ENCODE measurements at regions of chr2 and their contacts with region 1.

Region 1: GRCh38 chr2:10122386-10123280 is at the start of gene RRM2:
- DNase-seq: peak; percentile 92
- H3K4me3 Mint-ChIP-seq: peak within 1 kb of the TSS; percentile 99
- H3K27ac Mint-ChIP-seq: peak within 1 kb of the TSS; percentile 100
- H3K4me1 Mint-ChIP-seq: peaks cover 64% of the 10 kb centered on the region
- H3K27me3 Mint-ChIP-seq: no peaks in the 10 kb centered on the region
- total RNA-seq, gene RRM2: 328 and 351 TPM in 2 replicates

Region 2: GRCh38 chr2:9951272-9951972 is 171.2 kb before region 1 on chr2 and contains the start of gene GRHL1:
- intact Hi-C with region 1: loop called (anchors 1 kb)
- DNase-seq: peak; percentile 92
- H3K4me3 Mint-ChIP-seq: peak within 1 kb of the TSS; percentile 85
- H3K27ac Mint-ChIP-seq: peak within 1 kb of the TSS; percentile 82
- H3K4me1 Mint-ChIP-seq: peaks cover 24% of the 10 kb centered on the region
- H3K27me3 Mint-ChIP-seq: peaks cover 54% of the 10 kb centered on the region
- total RNA-seq, gene GRHL1: 1.4 and 1.5 TPM in 2 replicates

Region 3: DNA sequence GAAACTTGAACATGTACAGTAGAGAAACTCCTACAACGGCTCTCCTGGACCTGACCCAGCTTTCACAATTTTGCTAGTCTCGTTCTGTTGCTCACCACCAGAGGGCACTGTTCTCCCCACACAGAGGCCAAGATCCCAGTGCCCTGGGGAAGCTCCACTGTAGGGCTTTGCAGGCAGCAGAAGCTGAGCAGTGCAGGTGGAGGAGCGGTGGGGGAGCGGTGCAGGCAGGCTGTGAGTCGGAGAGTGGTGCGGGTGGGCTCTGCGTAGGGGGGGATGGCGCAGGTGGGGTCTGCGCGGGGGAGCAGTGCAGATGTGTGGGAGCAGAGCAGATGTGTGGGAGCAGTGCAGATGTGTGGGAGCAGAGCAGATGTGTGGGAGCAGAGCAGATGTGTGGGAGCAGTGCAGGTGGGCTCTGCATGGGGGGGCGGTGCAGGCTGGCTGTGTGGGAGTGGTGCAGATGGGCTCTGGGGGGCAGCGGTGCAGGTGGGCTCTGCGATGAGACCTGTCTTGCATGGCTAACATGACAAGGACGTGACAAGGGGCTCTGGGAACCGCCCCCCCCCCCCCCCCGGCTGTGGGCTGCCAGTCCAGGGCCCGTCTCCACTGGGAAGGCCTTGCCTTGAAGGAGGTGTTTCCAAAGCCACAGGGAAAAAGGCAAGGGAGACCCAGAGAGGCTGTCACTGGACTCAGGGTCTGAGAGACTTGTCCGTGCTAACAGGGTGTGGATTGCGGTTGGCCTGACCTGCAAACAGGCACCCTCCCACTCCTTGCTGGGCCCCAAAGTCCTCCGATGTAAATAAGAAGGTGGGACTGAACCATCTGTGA is 49.8 kb before region 1 on chr2:
- intact Hi-C with region 1: loop called (anchors 1 kb)
- DNase-seq: peak; percentile 76
- H3K4me3 Mint-ChIP-seq: no peak overlapping the region
- H3K27ac Mint-ChIP-seq: no peak overlapping the region
- H3K4me1 Mint-ChIP-seq: peaks cover 16% of the 10 kb centered on the region
- H3K27me3 Mint-ChIP-seq: peaks cover 49% of the 10 kb centered on the region

Region 4: DNA sequence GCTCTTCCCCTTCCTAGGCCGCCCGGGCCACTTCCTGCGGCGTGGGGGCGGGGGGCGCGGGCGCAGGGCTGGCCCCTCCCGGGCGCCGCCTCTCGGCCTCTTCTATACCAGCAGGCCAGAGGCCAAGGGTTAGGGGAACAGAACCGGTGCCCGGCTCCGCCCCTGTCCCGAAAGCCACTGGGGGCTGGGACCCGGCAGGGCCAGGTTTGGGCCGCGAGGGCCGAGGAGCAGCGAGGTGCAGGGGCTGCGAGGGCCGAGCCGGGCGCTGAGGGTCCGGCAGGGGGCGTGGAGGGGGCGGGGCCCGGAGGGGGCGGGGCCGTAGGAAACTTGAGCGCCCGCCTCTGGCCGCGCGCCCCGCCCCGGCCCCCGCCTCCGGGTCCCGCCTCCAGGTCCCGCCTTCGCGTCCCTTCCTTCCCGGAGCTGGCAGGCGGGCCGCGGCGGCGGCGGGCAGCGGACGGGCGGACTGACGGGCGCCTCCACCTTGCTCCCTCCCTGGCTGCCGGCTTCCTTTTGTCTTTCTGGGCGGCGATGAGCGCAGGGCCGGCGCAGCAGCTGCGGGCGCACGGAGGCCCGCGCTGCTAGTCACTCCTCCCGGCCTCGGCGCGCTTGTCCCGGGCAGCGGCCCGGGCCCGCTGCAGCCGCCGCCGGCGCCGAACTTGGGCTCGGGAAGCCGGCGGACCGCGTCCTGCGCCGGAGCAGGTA is 180.0 kb after region 1 on chr2 and contains the start of gene HPCAL1:
- intact Hi-C with region 1: loop called (anchors 1 kb)
- DNase-seq: peak; percentile 80
- H3K4me3 Mint-ChIP-seq: peak within 1 kb of the TSS; percentile 99
- H3K27ac Mint-ChIP-seq: peak within 1 kb of the TSS; percentile 90
- H3K4me1 Mint-ChIP-seq: peaks cover 73% of the 10 kb centered on the region
- H3K27me3 Mint-ChIP-seq: peaks cover 4% of the 10 kb centered on the region
- total RNA-seq, gene HPCAL1: 59.6 and 62.4 TPM in 2 replicates

Region 5: GRCh38 chr2:10408649-10409579 is 286.3 kb after region 1 on chr2:
- intact Hi-C with region 1: loop called (anchors 1 kb)
- DNase-seq: peak; percentile 76
- H3K4me3 Mint-ChIP-seq: peak overlapping the region; percentile 80
- H3K27ac Mint-ChIP-seq: peak overlapping the region; percentile 93
- H3K4me1 Mint-ChIP-seq: peaks cover 54% of the 10 kb centered on the region
- H3K27me3 Mint-ChIP-seq: no peaks in the 10 kb centered on the region

Region 6: DNA sequence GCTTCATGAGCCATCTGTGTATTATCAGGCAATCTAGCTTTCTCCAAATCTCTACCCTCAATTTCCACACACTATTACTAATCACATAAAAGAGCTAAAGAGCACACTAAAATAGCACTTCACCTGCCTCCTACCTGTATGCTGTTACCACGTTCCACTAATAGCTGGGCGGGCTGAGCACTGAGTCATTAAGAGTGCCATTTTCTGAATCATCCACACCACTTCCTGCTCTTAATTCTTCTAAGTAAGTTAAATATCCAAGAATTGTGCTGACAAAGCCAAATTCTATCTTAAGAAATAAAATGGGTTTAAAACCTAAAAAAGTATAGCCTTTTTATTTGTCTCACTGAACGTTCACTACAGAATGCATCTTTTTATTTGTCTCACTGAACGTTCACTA is 531.4 kb after region 1 on chr2:
- intact Hi-C with region 1: loop called (anchors 1 kb)
- DNase-seq: peak; percentile 34
- H3K4me3 Mint-ChIP-seq: peak overlapping the region; percentile 74
- H3K27ac Mint-ChIP-seq: peak overlapping the region; percentile 93
- H3K4me1 Mint-ChIP-seq: peaks cover 54% of the 10 kb centered on the region
- H3K27me3 Mint-ChIP-seq: no peaks in the 10 kb centered on the region

Measured in activated T-helper 1 cell treated with anti-CD3 and anti-CD28 coated beads, Interleukin-12 subunit alpha, Interleukin-12 subunit beta, Interleukin-2, Interleukin-4 antibody, amounts not matched to agents 30 ng/mL and 10 ng/mL and 1 ng/mL, durations not matched to agents 14 hours and 24 hours and 36 hours (primary cell).